OCI-LY7 (cell line): ENCODE measurements at regions of chr3 and their contacts with region 1.

Region 1: DNA sequence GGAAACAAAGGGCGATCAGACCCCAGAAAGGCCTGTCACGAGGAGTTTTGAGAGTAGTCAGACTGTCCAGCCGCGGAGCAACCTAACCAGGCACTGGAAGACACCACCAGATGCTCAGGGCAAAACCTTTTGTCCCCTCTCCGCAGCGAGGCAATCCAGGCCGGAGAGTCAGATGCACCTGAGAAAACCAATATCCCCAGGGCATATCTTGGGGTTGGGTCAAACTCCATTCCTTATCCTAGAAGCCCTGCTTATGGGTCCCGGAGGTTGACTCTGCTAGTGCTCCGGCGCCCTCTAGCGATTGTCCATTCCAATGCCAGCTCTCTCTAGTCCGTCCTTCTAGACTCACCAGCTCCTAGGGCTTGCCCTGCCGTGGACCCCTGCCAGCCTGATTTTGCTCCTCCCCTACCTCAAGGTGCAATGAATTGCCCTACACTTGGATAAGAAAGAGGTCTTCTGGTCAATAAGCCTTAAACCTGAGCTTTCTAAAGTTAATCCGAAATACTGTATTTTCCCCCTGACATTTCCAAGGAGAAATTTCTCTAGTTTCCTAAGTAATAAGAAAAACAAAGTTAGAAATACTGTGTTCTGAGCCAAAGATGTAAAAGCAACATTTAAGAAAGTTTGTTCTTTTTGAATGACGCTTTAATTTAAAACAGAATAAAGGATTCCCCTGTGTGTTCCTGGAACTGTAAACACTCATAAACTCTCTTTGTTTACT is 5.5 kb downstream of the CPNE4 start:
- DNase-seq: peak; percentile 63
- H3K4me3 ChIP-seq: no peak overlapping the region
- H3K27ac ChIP-seq: no peak overlapping the region
- H3K4me1 ChIP-seq: no peaks in the 10 kb centered on the region
- CTCF ChIP-seq: peak; percentile 93

Region 2: DNA sequence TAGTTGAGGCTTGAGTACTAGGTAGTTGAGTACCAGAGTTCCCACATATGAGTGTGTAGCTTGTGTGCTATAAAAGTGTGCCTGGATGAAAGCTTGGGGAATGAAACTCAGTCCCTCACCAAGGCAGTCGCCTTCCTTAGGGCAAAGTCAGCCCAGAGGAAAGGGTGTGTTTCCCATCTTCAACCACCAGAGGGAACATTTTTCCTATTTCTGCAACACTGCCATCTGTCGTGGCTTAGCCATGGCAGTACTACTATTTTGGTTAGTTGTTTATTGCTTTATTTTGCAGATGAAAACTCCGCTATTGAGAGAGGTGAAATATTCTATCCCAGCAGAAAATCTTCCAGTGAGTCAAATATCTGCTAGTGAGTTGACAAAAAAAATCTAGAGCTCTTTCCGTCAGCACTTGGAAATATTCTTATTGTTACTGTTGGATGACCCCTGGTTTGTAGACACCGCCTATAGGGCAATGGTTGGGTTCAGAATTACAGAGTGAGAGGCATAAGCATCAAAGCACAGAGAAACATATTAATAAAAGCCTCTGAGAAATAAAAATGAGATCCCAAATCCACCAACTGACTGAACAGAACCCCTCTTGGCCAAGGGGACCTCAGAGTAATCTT is 234.5 kb before region 1 on chr3:
- CTCF ChIA-PET with region 1: no interaction called
- POLR2A ChIA-PET with region 1: no interaction called
- intact Hi-C with region 1: loop called (anchors 1 kb)
- DNase-seq: peak; percentile 41
- H3K4me3 ChIP-seq: no peak overlapping the region
- H3K27ac ChIP-seq: no peak overlapping the region
- H3K4me1 ChIP-seq: no peaks in the 10 kb centered on the region
- CTCF ChIP-seq: peak; percentile 83

Region 3: GRCh38 chr3:132042681-132043080 is 13.3 kb after region 1 on chr3:
- CTCF ChIA-PET with region 1: no interaction called
- POLR2A ChIA-PET with region 1: no interaction called
- intact Hi-C with region 1: no loop called
- DNase-seq: no peak
- H3K4me3 ChIP-seq: no peak overlapping the region
- H3K27ac ChIP-seq: no peak overlapping the region
- H3K4me1 ChIP-seq: no peaks in the 10 kb centered on the region
- CTCF ChIP-seq: no peak